ENCODE measurements at regions of chr2 and their contacts with region 1.

Region 1: DNA sequence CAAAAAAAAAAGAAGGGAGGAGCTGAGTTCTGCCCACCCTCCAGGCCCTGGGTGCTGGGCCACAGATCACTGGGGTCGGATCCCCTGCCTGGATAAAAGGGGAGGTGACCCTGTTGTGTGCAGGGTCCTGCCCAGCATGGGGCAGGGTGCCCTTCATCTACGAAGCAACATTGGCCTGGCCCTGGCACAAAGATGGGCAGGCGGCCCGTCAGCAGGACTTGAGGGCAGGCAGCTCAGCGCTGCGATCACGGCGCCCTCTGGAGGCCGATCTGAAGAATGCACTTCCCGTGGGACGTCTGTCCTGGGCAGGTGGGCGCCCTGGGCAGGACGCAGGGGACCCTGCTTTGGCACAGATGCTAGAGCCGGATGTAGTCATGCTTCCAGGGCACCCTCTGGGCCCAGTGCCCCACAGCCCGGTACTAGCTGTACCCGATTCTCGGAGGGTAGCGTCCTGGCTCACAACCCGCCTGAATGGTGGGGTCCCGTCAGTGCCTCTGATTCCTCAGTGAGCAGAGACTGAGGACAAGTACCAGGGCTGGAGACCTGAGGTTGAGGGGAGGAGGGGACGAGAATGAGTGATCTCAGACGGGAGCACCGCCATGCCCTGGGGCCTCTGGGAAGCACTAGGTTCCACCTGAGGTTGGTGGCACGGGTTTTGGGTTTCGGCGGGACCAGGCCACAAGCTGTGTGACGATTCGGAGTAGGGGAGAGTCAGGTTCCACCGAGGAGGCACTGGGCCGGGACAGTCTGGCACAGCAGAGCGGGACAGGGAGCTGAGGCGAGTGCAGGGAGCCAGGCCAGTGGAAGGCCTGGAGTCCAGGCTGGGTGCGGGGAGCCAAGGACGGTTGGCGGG is 18.0 kb downstream of the ARID5A start:
- DNase-seq: peak; percentile 86
- ATAC-seq: peak; percentile 83
- H3K4me3 ChIP-seq: no peak overlapping the region
- H3K4me3 Mint-ChIP-seq: peak overlapping the region; percentile 16
- H3K27ac ChIP-seq: no peak overlapping the region
- H3K27ac Mint-ChIP-seq: peak overlapping the region; percentile 10
- H3K4me1 ChIP-seq: peaks cover 6 to 11% of the 10 kb centered on the region in 2 donors
- H3K4me1 Mint-ChIP-seq: peaks cover 15% of the 10 kb centered on the region
- H3K27me3 ChIP-seq: no peaks in the 10 kb centered on the region
- H3K27me3 Mint-ChIP-seq: no peaks in the 10 kb centered on the region
- CTCF ChIP-seq: peak; percentile 99

Region 2: GRCh38 chr2:96407041-96407918 is 147.2 kb before region 1 on chr2:
- CTCF ChIA-PET with region 1: interaction called, 94 read pairs
- POLR2A ChIA-PET with region 1: interaction called, 4 read pairs
- intact Hi-C with region 1: no loop called
- DNase-seq: peak; percentile 79
- ATAC-seq: peak; percentile 88
- H3K4me3 ChIP-seq: peak overlapping the region in 1 of 5 experiments; percentile 6
- H3K4me3 Mint-ChIP-seq: no peak overlapping the region
- H3K27ac ChIP-seq: no peak overlapping the region
- H3K27ac Mint-ChIP-seq: no peak overlapping the region
- H3K4me1 ChIP-seq: peaks cover 7 to 9% of the 10 kb centered on the region in 2 donors
- H3K4me1 Mint-ChIP-seq: peaks cover 9% of the 10 kb centered on the region
- H3K27me3 ChIP-seq: no peaks in the 10 kb centered on the region
- H3K27me3 Mint-ChIP-seq: peaks cover 3% of the 10 kb centered on the region
- CTCF ChIP-seq: peak; percentile 85

Region 3: DNA sequence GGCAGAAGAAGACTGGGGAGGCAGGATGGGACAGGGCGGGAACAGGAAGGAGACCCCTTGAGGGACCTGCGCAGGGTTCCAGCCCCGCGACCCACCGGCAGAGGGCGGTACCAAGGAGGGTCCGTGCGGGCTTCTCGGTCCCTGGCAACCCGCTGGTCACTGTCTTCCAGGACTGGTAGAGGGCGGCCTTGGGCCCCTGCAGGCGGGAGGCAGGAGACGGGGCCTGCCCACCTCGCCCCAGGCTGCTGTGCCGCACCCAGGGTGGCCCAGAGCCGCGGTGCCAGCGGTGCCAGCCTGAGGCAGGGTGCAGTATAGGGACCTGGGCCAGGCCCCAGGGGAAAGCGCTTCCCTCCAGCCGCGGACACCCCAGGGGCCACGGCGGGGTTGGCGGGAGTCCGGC is 83.9 kb before region 1 on chr2:
- CTCF ChIA-PET with region 1: interaction called, 8 read pairs
- POLR2A ChIA-PET with region 1: no interaction called
- intact Hi-C with region 1: loop called (anchors 1 kb)
- DNase-seq: peak; percentile 58
- ATAC-seq: peak; percentile 61
- H3K4me3 ChIP-seq: no peak overlapping the region
- H3K4me3 Mint-ChIP-seq: no peak overlapping the region
- H3K27ac ChIP-seq: no peak overlapping the region
- H3K27ac Mint-ChIP-seq: no peak overlapping the region
- H3K4me1 ChIP-seq: peaks cover 3 to 6% of the 10 kb centered on the region in 2 donors
- H3K4me1 Mint-ChIP-seq: peaks cover 2% of the 10 kb centered on the region
- H3K27me3 ChIP-seq: peaks cover 0 to 13% (median 8%) of the 10 kb centered on the region in 4 experiments
- H3K27me3 Mint-ChIP-seq: peaks cover 7% of the 10 kb centered on the region
- CTCF ChIP-seq: peak; percentile 75

Region 4: GRCh38 chr2:96527286-96528005 is 27.1 kb before region 1 on chr2:
- CTCF ChIA-PET with region 1: interaction called, 84 read pairs
- POLR2A ChIA-PET with region 1: interaction called, 4 read pairs
- intact Hi-C with region 1: loop called (anchors 1 kb)
- DNase-seq: peak; percentile 66
- ATAC-seq: peak; percentile 32
- H3K4me3 ChIP-seq: peak overlapping the region; percentile 31 to 75 (median 64)
- H3K4me3 Mint-ChIP-seq: peak overlapping the region; percentile 87
- H3K27ac ChIP-seq: peak overlapping the region in 1 of 2 donors; percentile 60
- H3K27ac Mint-ChIP-seq: peak overlapping the region; percentile 78
- H3K4me1 ChIP-seq: peaks cover 21 to 47% of the 10 kb centered on the region in 2 donors
- H3K4me1 Mint-ChIP-seq: peaks cover 48% of the 10 kb centered on the region
- H3K27me3 ChIP-seq: peaks cover 0 to 17% (median 0%) of the 10 kb centered on the region in 4 experiments
- H3K27me3 Mint-ChIP-seq: peaks cover 4% of the 10 kb centered on the region
- CTCF ChIP-seq: peak; percentile 50

Region 5: GRCh38 chr2:96541398-96542152 is 12.9 kb before region 1 on chr2:
- CTCF ChIA-PET with region 1: interaction called, 34 read pairs
- POLR2A ChIA-PET with region 1: interaction called, 12 read pairs
- intact Hi-C with region 1: loop called (anchors 1 kb)
- DNase-seq: no peak
- ATAC-seq: no peak
- H3K4me3 ChIP-seq: no peak overlapping the region
- H3K4me3 Mint-ChIP-seq: no peak overlapping the region
- H3K27ac ChIP-seq: no peak overlapping the region
- H3K27ac Mint-ChIP-seq: no peak overlapping the region
- H3K4me1 ChIP-seq: peaks cover 23 to 29% of the 10 kb centered on the region in 2 donors
- H3K4me1 Mint-ChIP-seq: peaks cover 52% of the 10 kb centered on the region
- H3K27me3 ChIP-seq: no peaks in the 10 kb centered on the region
- H3K27me3 Mint-ChIP-seq: no peaks in the 10 kb centered on the region
- CTCF ChIP-seq: no peak

Region 6: GRCh38 chr2:96665083-96665569 is 110.6 kb after region 1 on chr2:
- CTCF ChIA-PET with region 1: no interaction called
- POLR2A ChIA-PET with region 1: no interaction called
- intact Hi-C with region 1: no loop called
- DNase-seq: no peak
- ATAC-seq: no peak
- H3K4me3 ChIP-seq: no peak overlapping the region
- H3K4me3 Mint-ChIP-seq: no peak overlapping the region
- H3K27ac ChIP-seq: no peak overlapping the region
- H3K27ac Mint-ChIP-seq: no peak overlapping the region
- H3K4me1 ChIP-seq: no peaks in the 10 kb centered on the region
- H3K4me1 Mint-ChIP-seq: no peaks in the 10 kb centered on the region
- H3K27me3 ChIP-seq: no peaks in the 10 kb centered on the region
- H3K27me3 Mint-ChIP-seq: peaks cover 3% of the 10 kb centered on the region
- CTCF ChIP-seq: no peak

Measured in B cell (primary cell).